ENCODE measurements at regions of chr7 and their contacts with region 1.

Region 1: GRCh38 chr7:141975806-141976523 is 2.4 kb upstream of the TAS2R38 start:
- DNase-seq: peak; percentile 75 to 82 (median 79)
- H3K4me3 ChIP-seq: peak overlapping the region; percentile 54 to 82 (median 58)
- H3K4me3 Mint-ChIP-seq: peak overlapping the region; percentile 82 to 90
- H3K27ac ChIP-seq: peak overlapping the region; percentile 42 to 95
- H3K27ac Mint-ChIP-seq: peak overlapping the region; percentile 76 to 98 (median 94)
- H3K4me1 ChIP-seq: peaks cover 18 to 23% of the 10 kb centered on the region in 2 donors
- H3K4me1 Mint-ChIP-seq: peaks cover 31% of the 10 kb centered on the region
- H3K27me3 ChIP-seq: no peaks in the 10 kb centered on the region
- H3K27me3 Mint-ChIP-seq: peaks cover 0 to 1% (median 0%) of the 10 kb centered on the region in 3 donors
- CTCF ChIP-seq: peak; percentile 93

Region 2: GRCh38 chr7:142030294-142030693 is 54.3 kb after region 1 on chr7:
- intact Hi-C with region 1: loop called in 1 of 2 experiments (anchors 10 kb)
- DNase-seq: peak; percentile 41 to 77 (median 69)
- H3K4me3 ChIP-seq: peak overlapping the region in 1 of 3 experiments; percentile 15
- H3K4me3 Mint-ChIP-seq: peak overlapping the region in 1 of 2 donors; percentile 74
- H3K27ac ChIP-seq: peak overlapping the region in 1 of 2 donors; percentile 71
- H3K27ac Mint-ChIP-seq: peak overlapping the region in 4 of 7 donors; percentile 12 to 83 (median 70)
- H3K4me1 ChIP-seq: peaks cover 15 to 23% of the 10 kb centered on the region in 2 donors
- H3K4me1 Mint-ChIP-seq: peaks cover 21% of the 10 kb centered on the region
- H3K27me3 ChIP-seq: no peaks in the 10 kb centered on the region
- H3K27me3 Mint-ChIP-seq: peaks cover 0 to 2% (median 0%) of the 10 kb centered on the region in 3 donors
- CTCF ChIP-seq: peak; percentile 69

Region 3: DNA sequence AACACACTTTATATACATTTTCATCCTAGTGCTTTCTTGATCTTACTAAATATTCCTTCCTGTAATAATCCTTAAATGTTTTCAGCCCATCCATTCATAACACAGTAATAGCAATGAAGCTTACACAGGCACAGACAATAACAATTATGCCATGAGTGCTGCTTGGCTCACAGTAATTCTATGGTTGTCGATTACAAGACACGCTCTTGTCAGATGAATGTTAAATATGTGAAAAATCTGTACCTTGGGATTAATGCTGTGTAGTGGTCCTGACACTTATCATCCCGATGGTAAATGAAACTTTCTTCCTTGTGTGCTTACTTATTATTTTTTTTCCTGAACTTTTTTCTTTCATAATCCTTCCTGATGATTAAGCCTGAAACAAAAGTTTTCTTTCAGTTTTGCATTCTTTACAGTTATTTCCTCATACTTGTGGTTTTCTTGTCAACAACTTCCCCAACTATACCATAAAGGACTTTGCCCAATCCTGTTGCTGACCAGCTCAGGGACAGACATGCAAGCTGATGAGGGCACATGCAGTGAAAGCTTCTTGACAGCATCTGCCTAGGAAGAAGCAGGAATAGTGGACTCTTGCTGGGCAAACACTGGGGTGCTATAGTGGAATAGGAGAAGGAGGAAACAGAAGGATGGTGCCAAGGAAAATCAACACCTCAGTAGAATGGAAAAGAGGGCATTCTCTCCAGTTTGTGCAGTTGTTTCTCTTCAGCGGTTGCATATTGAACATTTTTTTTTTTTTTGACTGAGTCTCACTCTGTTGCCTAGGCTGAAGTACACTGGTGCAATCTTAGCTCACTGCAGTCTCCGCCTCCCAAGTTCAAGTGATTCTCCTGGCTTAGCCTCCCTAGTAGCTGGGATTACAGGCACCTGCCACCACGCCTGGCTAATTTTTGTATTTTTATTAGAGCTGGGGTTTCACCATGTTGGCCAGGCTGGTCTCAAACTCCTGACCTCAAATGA is 128.9 kb after region 1 on chr7:
- intact Hi-C with region 1: loop called in 1 of 2 experiments (anchors 10 kb)
- DNase-seq: peak; percentile 78 to 92 (median 92)
- H3K4me3 ChIP-seq: peak overlapping the region; percentile 29 to 71 (median 63)
- H3K4me3 Mint-ChIP-seq: peak overlapping the region; percentile 69 to 79
- H3K27ac ChIP-seq: peak overlapping the region; percentile 61 to 79
- H3K27ac Mint-ChIP-seq: peak overlapping the region; percentile 86 to 99 (median 94)
- H3K4me1 ChIP-seq: peaks cover 33 to 53% of the 10 kb centered on the region in 2 donors
- H3K4me1 Mint-ChIP-seq: peaks cover 52% of the 10 kb centered on the region
- H3K27me3 ChIP-seq: no peaks in the 10 kb centered on the region
- H3K27me3 Mint-ChIP-seq: no peaks in the 10 kb centered on the region
- CTCF ChIP-seq: no peak